ENCODE measurements at regions of chr11 and their contacts with region 1.

Region 1: GRCh38 chr11:4636962-4637661 is at the start of gene OR51D1:
- DNase-seq: peak; percentile 76
- H3K4me3 Mint-ChIP-seq: no peak within 1 kb of the TSS
- H3K27ac Mint-ChIP-seq: no peak within 1 kb of the TSS
- H3K4me1 Mint-ChIP-seq: no peaks in the 10 kb centered on the region
- H3K27me3 Mint-ChIP-seq: peaks cover 2% of the 10 kb centered on the region
- total RNA-seq, gene OR51D1: not detected

Region 2: DNA sequence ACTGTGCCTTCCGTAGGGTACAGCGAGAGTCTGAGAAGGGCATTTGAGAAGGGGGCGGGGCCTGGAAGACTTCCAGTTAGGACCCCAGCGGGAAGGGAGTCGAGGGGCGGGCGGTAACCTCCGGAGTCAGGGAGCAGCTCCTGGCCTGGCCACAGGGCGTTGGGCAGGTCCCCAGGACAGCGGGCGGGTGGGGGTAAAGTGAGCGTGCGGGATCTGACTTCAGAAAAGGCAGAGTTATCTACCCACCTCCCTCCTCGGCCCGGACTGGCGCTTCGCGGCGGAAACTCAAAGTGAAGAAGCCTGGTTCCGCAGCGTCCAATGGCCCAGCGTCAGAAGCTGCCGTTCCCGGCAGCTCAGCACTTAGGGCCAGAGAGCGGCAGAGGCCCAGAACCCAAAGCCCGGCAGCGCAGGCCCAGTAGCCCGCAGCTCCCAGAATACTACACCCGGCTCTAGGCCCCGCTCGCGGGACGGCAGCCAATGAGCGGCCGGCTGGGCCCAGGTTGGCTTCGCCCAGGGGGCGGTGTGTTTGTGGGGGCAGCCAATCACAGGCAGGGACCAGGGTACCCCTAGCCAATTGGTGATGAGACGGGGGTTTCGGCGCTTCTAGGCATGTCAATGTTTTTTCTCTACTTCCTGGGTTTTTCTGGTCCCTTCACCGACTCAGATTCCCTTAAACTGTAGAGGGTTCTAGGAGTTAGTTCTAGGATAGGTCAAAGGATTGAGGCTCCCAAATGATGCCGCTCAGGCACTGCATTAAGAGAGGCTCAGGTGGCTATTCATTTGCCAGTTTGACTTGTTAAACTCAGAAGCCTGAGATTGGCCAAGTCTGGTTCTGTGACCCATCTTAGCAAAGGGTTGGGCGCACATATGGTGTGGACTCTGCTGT is 29.1 kb before region 1 on chr11 and contains the start of gene TRIM68:
- CTCF ChIA-PET with region 1: interaction called, 10 read pairs
- POLR2A ChIA-PET with region 1: no interaction called
- intact Hi-C with region 1: no loop called
- DNase-seq: peak; percentile 97
- H3K4me3 Mint-ChIP-seq: peak within 1 kb of the TSS; percentile 93
- H3K27ac Mint-ChIP-seq: peak within 1 kb of the TSS; percentile 87
- H3K4me1 Mint-ChIP-seq: peaks cover 34% of the 10 kb centered on the region
- H3K27me3 Mint-ChIP-seq: no peaks in the 10 kb centered on the region
- total RNA-seq, gene TRIM68: 8.7 to 9.2 TPM

Region 3: DNA sequence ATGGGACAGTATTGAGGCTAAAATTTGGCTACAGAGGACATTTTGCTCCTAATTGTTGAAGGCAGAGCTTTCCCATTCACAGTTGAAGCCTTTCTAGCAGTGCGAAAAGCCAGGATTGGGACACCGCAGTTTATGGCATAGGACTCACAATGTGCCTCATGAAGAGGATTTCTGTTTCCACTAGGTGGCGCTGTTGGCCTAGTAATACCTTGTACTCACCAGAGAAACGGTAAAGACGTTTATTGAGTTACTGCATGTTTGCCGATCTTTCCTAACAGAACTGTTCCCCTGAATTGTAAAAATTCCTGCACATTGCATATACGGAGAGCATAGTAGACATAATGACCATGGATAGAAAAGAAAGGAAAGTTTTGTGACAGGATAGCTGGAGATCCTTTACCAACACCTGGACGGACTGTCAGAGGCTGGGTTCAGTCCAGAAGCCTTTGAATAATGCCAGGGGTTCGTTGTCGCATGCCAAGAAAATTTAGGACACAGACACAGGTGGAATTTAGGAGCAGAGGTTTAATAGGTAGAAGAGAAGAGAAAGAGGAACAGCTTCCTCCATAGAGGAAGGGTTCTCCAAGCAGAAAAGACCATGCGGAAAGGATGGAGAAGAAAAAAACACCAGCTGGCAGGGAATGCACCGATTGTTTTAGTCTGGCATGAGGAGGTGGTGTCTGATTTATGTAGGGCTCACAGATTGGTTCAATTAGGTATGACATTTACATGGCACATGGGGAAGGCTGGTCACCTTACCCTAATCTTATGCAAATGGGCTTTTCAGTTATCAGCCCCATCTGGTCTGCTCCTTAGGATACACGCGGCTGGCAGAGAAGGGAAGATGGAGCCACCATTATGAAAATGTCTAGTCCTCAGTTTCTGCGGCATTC is 10.7 kb before region 1 on chr11:
- CTCF ChIA-PET with region 1: interaction called, 38 read pairs
- POLR2A ChIA-PET with region 1: no interaction called
- intact Hi-C with region 1: no loop called
- DNase-seq: peak; percentile 58
- H3K4me3 Mint-ChIP-seq: no peak overlapping the region
- H3K27ac Mint-ChIP-seq: no peak overlapping the region
- H3K4me1 Mint-ChIP-seq: no peaks in the 10 kb centered on the region
- H3K27me3 Mint-ChIP-seq: peaks cover 28% of the 10 kb centered on the region

Region 4: DNA sequence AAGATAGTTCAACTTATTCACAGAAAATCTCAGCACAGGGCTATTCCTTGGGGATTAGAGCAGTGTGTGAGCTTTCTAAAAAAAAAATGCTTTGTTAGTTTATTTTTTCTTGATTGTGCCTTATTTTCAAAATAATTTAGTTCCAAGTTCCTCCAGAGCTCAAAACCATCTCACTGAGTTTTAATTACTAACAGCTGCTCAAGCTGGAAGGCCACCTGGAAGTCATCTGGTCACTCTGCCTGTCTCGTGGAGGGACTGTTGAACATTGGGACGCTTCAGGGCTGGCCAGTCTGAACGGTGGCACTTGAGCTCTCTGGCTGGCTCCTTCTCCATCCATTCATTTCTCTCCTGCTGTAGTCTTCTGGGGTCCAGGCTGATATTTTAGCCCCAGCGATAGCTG is 10.7 kb after region 1 on chr11:
- CTCF ChIA-PET with region 1: interaction called, 16 read pairs
- POLR2A ChIA-PET with region 1: no interaction called
- intact Hi-C with region 1: no loop called
- DNase-seq: no peak
- H3K4me3 Mint-ChIP-seq: no peak overlapping the region
- H3K27ac Mint-ChIP-seq: no peak overlapping the region
- H3K4me1 Mint-ChIP-seq: no peaks in the 10 kb centered on the region
- H3K27me3 Mint-ChIP-seq: peaks cover 5% of the 10 kb centered on the region

Region 5: DNA sequence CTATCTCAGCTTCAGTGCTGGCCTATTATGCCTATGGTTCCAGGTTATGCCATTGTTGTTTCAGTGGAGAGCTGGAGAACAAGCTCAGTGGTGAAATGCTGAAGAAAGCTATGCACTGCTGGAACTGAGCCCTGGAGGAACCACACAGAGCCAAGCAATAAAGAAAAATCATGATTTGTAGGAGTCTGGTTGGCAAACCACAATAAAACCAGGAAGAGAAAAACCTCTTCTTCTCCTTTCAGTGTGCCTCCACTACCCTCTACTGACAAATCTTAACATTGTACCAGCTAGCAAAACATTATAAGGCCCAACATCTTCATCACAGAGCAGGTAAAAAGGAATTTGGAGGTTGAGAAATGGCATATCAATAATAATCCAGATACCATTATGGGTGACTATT is 189.3 kb after region 1 on chr11:
- CTCF ChIA-PET with region 1: interaction called, 5 read pairs
- POLR2A ChIA-PET with region 1: no interaction called
- intact Hi-C with region 1: loop called (anchors 10 kb)
- DNase-seq: no peak
- H3K4me3 Mint-ChIP-seq: no peak overlapping the region
- H3K27ac Mint-ChIP-seq: no peak overlapping the region
- H3K4me1 Mint-ChIP-seq: no peaks in the 10 kb centered on the region
- H3K27me3 Mint-ChIP-seq: peaks cover 7% of the 10 kb centered on the region

Region 6: DNA sequence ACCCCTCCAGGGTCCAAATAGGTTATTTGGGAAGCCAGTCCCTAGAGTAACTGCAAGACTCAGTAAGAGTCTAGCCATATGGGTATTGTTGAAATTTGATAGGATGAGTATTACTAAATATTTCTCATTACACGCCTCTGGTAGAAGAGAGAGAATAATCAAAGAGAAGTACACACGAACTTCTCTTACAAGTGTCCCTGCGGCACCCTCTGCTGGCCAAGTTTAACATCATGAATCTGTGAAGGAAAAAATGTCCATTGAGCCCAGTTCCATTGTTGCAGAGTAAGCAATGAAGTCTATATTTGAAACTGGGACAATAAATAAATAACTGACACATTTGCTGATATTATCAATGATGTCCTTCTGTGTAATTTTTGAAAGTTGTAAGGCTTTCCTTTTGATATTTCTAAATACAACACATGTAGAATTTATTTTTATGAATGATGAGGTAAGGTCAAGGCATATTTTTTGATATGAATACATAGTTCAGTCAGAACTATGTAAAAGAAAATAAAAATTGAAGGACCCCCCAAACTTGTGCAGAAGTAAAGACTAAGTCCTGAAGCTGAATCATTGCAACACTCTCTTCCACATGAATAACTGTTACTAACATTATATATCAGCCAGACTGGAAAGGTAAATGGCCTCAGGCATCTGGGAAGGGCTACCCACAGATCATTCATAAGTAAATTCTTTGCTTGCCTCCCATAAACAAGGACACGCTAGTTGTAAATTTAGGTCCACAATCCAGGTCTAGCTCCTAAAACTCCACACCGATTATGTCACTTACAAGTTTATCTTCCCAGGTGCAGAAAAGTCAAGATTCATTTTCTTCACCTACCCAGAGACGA is 367.5 kb after region 1 on chr11:
- CTCF ChIA-PET with region 1: interaction called, 10 read pairs
- POLR2A ChIA-PET with region 1: no interaction called
- intact Hi-C with region 1: loop called (anchors 1 kb)
- DNase-seq: peak; percentile 38
- H3K4me3 Mint-ChIP-seq: no peak overlapping the region
- H3K27ac Mint-ChIP-seq: no peak overlapping the region
- H3K4me1 Mint-ChIP-seq: no peaks in the 10 kb centered on the region
- H3K27me3 Mint-ChIP-seq: no peaks in the 10 kb centered on the region

Region 7: GRCh38 chr11:5380740-5381342 is 743.7 kb after region 1 on chr11:
- CTCF ChIA-PET with region 1: interaction called, 4 read pairs
- POLR2A ChIA-PET with region 1: no interaction called
- intact Hi-C with region 1: loop called (anchors 5 kb)
- DNase-seq: peak; percentile 40
- H3K4me3 Mint-ChIP-seq: no peak overlapping the region
- H3K27ac Mint-ChIP-seq: no peak overlapping the region
- H3K4me1 Mint-ChIP-seq: no peaks in the 10 kb centered on the region
- H3K27me3 Mint-ChIP-seq: no peaks in the 10 kb centered on the region